ENCODE measurements at regions of chr15 and their contacts with region 1.

Region 1: DNA sequence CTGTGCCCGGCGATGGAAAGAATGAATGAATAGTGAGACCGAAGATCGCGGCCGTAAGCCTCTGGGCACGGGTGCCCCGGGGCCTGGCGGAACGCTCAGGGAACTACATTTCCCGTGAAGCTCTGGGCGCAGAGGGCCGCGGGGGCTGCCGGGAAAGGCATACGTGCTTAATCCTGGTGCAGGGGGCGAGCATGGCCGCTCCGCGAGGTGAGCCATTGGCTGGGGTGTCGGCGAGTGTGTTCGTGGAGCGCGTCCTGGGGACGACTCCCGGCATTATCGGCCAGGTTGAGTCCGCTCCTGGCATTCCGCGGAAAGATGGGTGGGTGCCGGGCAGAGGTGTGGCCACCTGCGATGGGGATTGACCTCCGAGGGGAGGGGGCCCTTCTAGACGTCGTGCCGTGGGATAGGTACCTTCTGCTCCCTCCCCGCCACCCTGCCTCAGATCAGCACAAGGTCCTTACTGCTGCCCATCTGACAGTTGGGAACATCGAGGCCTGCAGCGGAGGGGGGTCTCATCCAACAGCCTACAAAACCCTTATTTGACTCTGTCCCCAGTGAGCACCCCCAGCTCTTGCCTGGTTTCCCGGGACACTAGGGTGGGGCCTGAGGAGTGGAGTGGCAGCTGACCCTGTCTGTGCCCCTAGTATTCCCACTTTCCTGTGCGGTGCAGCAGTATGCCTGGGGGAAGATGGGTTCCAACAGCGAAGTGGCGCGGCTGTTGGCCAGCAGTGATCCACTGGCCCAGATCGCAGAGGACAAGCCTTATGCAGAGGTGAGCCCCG is at the start of gene MPI:
- DNase-seq: peak; percentile 91 to 93 (median 92)
- ATAC-seq: peak; percentile 95
- H3K4me3 ChIP-seq: peak within 1 kb of the TSS; percentile 72
- H3K27ac ChIP-seq: peak within 1 kb of the TSS; percentile 76
- H3K4me1 ChIP-seq: peaks cover 26 to 33% of the 10 kb centered on the region in 2 experiments; a peak in 4 of 5 replicates
- H3K27me3 ChIP-seq: no peaks in the 10 kb centered on the region
- CTCF ChIP-seq: no peak
- EP300 ChIP-seq: no peak
- POLR2A ChIP-seq: peak; percentile 96
- RAD21 ChIP-seq: no peak
- polyA plus RNA-seq, gene MPI: 41.8 to 46.7 TPM

Region 2: DNA sequence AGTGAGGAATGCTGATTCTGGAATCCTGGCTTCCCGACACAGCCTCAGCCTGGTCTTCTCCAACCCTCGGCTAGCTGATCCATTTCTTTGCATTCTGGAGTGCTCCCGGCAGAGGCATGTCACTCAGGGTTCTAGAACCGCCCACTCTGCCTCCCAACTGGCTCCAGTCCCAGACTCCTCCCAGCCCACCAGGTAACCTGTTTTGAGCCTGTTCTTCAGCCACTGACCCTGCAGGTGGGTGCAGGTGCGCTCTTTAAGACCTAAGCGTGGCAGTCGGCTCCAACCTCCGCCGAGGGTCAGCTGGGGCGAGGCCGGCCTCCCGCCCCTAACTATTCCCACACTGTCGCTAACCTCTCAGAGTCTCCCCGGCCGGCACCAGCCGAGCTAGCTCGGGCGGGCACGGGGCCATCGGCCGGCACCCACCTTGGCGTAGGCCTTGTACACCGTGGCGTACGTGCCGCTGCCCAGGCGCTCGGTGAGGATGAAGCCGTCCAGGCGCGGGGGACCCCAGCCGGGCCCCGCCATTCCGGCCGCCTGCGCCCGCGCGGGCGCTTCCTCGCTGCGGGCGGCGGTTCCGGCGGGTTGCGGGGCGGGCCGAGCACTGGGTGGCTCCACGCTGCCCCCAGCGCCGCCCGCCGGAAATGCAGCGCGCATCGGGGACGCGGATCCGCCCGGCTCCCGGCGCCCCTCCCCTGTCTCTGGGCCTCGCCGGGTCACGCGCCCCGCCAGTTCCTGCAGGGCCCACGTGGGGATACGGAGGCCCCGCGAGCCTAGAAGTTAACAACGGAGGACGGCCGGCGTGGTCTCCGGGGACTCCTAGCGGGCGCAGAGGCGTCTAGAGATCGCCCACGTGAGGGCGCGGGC is 47.3 kb before region 1 on chr15 and contains the start of gene ULK3:
- CTCF ChIA-PET with region 1: no interaction called
- POLR2A ChIA-PET with region 1: no interaction called
- in situ Hi-C with region 1: no loop called
- intact Hi-C with region 1: loop called (anchors 5 kb)
- DNase-seq: peak; percentile 93 to 96 (median 94)
- ATAC-seq: peak; percentile 91
- H3K4me3 ChIP-seq: peak within 1 kb of the TSS; percentile 99
- H3K27ac ChIP-seq: peak within 1 kb of the TSS; percentile 77
- H3K4me1 ChIP-seq: peaks cover 19 to 59% of the 10 kb centered on the region in 2 experiments; a peak in 4 of 5 replicates
- H3K27me3 ChIP-seq: no peaks in the 10 kb centered on the region
- CTCF ChIP-seq: peak; percentile 67 to 85 (median 78)
- EP300 ChIP-seq: no peak
- POLR2A ChIP-seq: peak; percentile 81
- RAD21 ChIP-seq: peak; percentile 33 to 39
- polyA plus RNA-seq, gene ULK3: 0.68 to 0.88 TPM

Region 3: DNA sequence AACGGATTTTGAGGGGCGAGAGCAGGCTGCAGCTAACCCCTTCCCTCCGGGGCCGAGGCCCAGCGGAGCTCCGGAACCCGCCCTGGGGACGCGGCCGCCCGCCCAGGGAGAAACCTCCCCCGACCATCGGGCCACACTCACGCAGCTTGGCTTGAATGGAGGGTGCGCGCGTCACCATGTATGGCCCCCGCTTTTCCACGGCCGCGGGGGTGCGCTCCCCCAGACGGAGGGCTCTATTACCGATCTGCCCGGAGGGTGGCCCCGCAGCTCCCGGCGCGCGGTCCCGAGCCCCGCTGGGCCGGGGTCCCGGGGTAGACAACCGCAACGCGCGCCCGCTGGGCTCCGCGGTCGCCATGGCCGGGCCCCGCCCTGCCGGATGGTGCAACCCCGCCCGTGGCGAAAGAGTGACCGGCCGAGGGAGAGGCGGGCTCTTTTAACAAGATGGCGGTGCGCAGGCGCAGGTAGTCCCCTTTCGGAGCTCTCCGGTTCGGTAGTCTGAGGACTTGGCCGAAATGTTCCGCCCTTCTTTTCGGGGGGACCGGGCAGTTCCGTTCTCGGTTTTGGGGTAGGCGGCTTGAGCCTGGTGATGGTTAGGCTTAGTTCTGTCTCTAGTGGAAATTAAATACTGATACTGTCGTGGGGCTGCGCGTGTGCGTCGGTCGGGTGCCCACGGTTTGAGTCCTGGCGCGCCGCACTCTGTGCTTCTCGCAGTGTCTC is 16.5 kb after region 1 on chr15 and contains the start of gene FAM219B:
- CTCF ChIA-PET with region 1: no interaction called
- POLR2A ChIA-PET with region 1: interaction called, 17 read pairs
- in situ Hi-C with region 1: no loop called
- intact Hi-C with region 1: no loop called
- DNase-seq: peak; percentile 94 to 96 (median 95)
- ATAC-seq: peak; percentile 97
- H3K4me3 ChIP-seq: peak within 1 kb of the TSS; percentile 95
- H3K27ac ChIP-seq: peak within 1 kb of the TSS; percentile 89
- H3K4me1 ChIP-seq: peaks cover 11 to 14% of the 10 kb centered on the region in 2 experiments; a peak in 4 of 5 replicates
- H3K27me3 ChIP-seq: no peaks in the 10 kb centered on the region
- CTCF ChIP-seq: no peak; a peak in 1 of 6 replicates
- EP300 ChIP-seq: no peak
- POLR2A ChIP-seq: peak; percentile 87
- RAD21 ChIP-seq: no peak
- polyA plus RNA-seq, gene FAM219B: 6.8 to 10.2 TPM

Region 4: DNA sequence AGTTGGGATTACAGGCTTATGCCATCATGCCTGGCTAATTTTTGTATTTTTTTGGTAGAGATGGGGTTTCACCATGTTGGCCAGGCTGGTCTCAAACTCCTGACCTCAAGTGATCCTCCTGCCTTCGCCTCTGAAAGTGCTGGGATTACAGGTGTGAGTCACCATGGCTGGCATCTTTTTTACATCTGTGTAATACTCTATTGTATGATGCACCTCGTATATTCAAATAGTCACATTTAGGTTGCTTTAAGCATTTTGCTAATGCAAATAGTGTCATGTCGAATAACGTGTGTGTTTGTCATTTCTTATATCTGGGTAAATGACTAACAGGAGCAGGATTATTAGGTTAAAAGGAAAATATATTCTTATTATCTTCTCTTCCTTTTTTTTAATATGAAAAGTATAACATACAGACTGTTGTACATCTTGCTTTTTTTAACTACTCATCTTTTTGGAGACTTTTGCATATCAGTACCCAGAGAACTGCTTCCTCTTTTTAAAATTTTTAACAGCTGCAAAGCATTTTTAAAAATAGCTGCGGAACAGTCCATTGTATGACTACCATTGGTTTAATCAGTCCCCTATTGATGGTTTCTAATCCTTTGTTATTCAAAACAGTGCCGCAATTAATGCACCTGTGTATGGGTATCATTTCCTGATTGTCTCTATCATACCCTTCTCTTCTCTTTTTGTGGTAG is 118.7 kb after region 1 on chr15:
- CTCF ChIA-PET with region 1: no interaction called
- POLR2A ChIA-PET with region 1: no interaction called
- in situ Hi-C with region 1: no loop called
- intact Hi-C with region 1: no loop called
- DNase-seq: no peak
- ATAC-seq: no peak
- H3K4me3 ChIP-seq: no peak overlapping the region
- H3K27ac ChIP-seq: no peak overlapping the region
- H3K4me1 ChIP-seq: no peaks in the 10 kb centered on the region; a peak in 1 of 5 replicates
- H3K27me3 ChIP-seq: peaks cover 23 to 53% of the 10 kb centered on the region in 2 experiments; a peak in 4 of 5 replicates
- CTCF ChIP-seq: no peak
- EP300 ChIP-seq: no peak
- POLR2A ChIP-seq: no peak
- RAD21 ChIP-seq: no peak